ENCODE measurements at regions of chr22 and their contacts with region 1.

Region 1: DNA sequence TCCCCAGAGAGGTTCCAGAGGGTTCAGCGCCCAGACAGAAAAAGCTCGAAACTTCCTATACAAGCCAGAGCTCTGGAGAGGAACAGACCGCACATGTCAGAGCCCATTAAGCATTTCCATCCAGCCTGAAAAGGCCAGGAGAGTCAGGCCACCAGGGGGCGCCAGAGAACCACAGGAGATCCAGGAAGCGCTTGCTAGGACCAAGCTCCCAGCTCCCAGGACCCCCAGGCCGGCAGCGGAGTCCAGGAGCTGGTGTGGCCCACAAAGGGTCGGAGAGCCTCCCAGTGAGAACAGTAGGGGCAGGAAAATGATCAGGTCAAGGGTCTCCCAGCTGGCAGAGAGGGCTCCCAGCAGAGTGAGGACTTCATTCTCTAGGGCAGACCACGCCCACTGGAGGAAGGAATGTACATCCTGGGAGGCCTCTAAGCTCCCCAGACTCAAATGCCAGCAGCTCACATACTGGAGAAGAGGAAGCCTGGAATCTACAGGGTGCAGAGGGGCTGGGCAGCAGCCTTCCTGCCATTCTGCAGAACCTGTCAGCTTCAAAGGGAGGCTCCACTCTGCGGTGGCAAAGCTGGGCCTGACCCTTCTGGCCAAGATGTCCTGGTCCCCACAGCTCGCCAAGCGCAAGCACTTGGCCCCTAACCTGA is 2.1 kb upstream of the MEI1 start:
- DNase-seq: peak; percentile 31
- H3K4me3 ChIP-seq: peak overlapping the region; percentile 9; the same call in 1 of the 2 replicates
- CTCF ChIP-seq: peak; percentile 93

Region 2: GRCh38 chr22:41537203-41537602 is 160.0 kb before region 1 on chr22:
- CTCF ChIA-PET with region 1: no interaction called
- POLR2A ChIA-PET with region 1: no interaction called
- DNase-seq: no peak
- H3K4me3 ChIP-seq: no peak overlapping the region
- CTCF ChIP-seq: no peak

Region 3: GRCh38 chr22:41672775-41673509 is 24.3 kb before region 1 on chr22:
- CTCF ChIA-PET with region 1: interaction called, 58 read pairs
- POLR2A ChIA-PET with region 1: interaction called, 3 read pairs
- DNase-seq: no peak
- H3K4me3 ChIP-seq: no peak overlapping the region
- CTCF ChIP-seq: peak; percentile 27

Region 4: GRCh38 chr22:41739576-41739975 is 42.3 kb after region 1 on chr22:
- CTCF ChIA-PET with region 1: interaction called, 55 read pairs
- POLR2A ChIA-PET with region 1: no interaction called
- DNase-seq: no peak
- H3K4me3 ChIP-seq: no peak overlapping the region
- CTCF ChIP-seq: no peak

Region 5: DNA sequence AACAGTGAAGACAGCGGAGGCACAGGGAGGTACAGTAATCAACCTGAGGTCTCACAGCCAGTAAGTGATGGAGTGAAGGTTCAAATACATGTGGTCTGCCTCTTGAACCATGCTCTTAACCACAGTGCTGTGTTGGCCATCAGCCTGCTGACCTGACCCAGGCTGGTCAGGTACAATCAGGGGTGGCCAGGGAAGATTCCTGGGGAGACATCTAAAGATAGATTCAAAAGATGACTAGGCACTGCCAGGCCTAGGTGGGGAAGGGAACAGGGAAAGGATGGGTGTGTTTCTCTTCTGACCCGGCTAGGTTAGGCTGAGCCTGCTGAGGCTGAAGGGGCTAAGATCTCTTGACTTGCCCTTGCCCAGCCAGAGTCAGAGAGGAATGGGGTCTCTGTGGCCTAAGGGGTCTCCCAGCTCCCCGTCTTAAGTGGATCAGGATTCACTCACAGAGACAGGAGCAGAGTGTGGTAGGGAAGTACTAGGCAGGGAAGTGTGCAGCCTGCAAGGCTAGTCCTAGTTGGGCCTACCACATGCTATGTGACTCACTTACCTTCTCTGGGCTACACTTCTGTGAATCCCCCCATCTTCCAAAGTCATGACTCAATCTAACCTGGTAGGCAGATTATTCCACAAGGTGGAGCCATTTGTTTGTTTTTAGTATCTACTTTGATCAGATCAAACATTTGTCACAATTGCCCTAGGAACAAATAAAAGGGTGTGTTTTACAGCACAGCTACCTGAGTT is 125.2 kb after region 1 on chr22:
- CTCF ChIA-PET with region 1: interaction called, 10 read pairs
- POLR2A ChIA-PET with region 1: no interaction called
- DNase-seq: no peak
- H3K4me3 ChIP-seq: no peak overlapping the region
- CTCF ChIP-seq: peak; percentile 3

Region 6: DNA sequence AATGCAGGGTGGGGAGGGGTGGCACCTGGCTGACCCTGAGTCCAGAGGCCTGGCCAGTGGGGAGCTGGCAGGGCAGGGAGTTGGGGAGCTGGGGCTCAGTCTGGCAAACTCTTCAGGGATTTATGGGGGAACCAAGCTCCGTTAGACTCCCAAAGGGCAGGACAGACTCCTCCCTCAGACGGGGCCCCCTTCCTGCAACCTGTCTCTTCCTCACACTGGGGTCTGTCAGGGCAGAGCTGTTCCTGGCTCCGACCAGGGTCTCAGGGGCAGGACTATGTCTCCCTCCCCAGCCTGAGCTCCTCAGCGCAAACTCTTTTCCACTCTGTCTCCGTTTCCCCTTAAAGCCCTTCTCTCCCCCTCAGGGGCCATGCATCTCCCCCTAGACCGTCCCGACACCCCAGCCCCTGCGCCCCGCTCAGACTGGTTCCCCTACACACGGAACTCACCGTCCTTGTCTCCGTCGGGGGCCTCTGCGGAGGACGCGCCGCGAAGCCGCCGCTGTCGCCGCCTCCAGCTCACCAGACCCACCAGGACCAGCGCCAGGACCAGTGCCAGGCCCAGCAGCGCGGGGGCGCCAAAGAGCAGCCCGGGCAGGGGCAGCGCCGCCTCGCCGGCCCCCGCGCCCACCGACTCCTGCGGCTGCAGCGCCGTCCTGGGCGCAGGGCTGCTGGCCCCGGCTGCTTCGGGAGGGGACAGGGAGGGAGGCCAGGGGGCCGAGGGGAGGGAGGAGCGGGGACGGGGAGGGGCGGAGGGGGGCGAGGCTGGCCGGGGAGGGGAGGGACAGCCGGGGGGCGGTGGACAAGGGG is 228.6 kb after region 1 on chr22:
- CTCF ChIA-PET with region 1: interaction called, 19 read pairs
- POLR2A ChIA-PET with region 1: no interaction called
- DNase-seq: no peak
- H3K4me3 ChIP-seq: peak overlapping the region; percentile 41
- CTCF ChIP-seq: peak; percentile 79

Region 7: DNA sequence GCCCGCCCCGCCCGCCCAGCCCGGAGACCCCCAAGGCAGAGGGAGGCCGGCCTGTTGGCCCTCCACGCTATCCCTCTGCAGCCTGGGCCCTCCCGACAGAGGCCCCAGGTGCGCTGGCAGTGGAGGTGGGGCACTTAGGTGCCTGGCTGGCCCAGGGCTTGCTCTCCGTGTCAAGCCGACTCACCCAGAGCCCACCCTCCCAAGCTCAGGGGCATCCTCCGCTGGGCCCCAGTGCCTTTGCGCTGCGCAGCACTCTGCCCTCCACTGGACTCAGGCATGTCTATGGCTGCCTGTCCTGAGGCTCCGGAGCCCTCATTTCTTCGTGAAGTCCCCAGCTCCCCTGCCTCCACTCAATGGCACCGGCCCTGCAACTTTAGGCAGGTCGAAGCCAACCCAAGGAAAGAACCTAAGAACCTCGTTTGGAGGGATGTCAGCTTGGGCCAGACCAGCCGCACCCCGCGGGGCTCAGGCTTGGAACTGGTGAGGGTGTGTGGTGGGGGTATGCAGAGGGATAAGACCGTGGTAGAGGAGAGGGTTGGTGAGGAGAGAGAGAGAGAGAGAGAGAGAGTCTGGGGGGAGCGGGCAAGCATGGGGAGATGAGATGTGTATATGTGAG is 260.8 kb after region 1 on chr22:
- CTCF ChIA-PET with region 1: interaction called, 20 read pairs
- POLR2A ChIA-PET with region 1: no interaction called
- DNase-seq: no peak
- H3K4me3 ChIP-seq: no peak overlapping the region
- CTCF ChIP-seq: no peak

Measured in AG04449 (cell line).